Ascending aorta (tissue), 2 donors: ENCODE measurements at regions of chr9 and their contacts with region 1.

Region 1: DNA sequence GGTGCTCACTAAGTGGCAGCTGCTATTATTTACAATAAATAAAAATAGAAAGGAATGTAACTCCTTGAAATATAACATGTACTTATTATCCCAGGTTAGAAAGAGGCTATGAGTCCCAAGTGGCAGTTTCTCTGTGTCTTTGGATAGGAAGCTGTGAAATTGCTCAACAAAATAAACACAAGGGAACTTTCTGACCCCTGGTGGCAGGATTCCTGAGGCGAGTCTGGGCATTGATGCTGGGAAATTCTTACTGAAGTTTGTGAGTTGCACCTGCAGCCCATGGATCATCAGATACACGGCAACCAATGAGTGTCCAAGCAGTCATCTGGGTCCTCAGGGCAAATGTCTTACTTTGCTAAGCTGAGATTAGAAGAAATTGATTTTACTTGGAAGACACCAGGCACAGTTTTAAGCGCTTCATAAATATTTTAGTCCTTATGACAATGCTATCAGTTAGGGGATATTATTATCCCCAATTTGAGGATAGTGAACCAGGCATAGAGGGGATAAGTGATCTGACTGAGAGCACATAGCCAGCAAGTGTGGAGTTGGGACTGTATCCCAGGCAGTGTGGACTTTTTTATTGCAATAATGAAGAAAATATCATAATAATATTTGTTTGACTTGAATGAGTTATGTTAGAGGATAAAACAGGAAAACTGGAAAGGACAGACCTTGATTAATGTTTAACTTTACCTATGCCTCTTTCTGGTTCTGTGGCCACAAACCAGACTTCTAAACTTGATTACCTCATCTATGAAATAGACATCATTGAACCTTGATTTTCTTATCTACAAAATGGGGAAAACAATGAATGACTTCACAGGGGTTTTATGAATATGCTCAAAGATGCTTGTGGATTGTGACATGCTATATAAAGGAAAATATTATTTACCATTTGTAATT is 265.5 kb upstream of the ADAMTSL1 start:
- DNase-seq: peak in 1 of 2 donors; percentile 69
- H3K4me3 ChIP-seq: no peak overlapping the region
- H3K27ac ChIP-seq: no peak overlapping the region
- H3K4me1 ChIP-seq: peaks cover 0 to 3% of the 10 kb centered on the region in 2 donors
- H3K27me3 ChIP-seq: no peaks in the 10 kb centered on the region
- CTCF ChIP-seq: peak; percentile 10 to 68 (median 47)

Region 2: GRCh38 chr9:17531642-17532254 is 676.7 kb before region 1 on chr9:
- intact Hi-C with region 1: loop called (anchors 5 kb)
- DNase-seq: no peak
- H3K4me3 ChIP-seq: no peak overlapping the region
- H3K27ac ChIP-seq: no peak overlapping the region
- H3K4me1 ChIP-seq: no peaks in the 10 kb centered on the region
- H3K27me3 ChIP-seq: no peaks in the 10 kb centered on the region
- CTCF ChIP-seq: peak in 2 of 3 experiments; percentile 28 to 52

Region 3: DNA sequence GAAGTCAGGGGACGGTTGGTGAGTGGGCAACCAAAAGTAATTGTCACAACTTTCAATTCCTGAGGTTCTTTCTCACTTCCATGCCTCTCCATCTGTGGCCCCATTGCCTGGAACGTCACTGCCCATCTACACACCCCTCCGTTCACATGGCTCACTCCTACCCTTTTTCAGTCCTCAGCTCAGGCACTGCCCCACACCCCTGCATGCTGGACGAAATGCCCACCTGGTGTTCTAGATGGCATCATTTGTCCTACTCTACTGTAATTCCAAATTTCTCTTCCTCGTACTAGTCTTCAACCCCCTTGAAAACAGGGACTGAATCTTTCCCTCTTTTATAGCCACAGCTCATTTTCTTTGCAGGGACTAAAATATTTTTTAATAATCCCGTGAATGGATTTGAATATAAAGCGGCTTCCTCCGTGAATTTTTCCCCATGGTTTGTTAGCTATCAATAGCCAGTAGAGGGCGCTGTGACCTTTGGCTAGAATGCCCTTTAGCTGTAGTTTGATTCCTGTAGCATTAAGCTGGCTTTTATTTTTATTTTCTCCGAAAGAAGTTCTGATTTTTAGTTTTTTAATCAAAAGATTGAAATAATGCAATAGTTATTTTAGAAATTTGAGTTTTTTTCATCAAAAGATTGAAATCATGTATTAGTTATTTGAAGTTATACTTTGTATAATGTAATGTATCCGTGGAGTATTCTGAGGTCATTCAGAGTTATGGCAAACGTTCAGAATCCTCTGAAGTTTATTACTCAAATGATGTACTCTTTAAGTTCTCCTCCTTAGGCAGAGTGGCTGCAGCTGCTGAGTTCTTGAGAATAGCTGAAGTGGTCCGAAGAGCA is 397.5 kb before region 1 on chr9:
- intact Hi-C with region 1: loop called (anchors 1 kb)
- DNase-seq: peak in 1 of 2 donors; percentile 68
- H3K4me3 ChIP-seq: no peak overlapping the region
- H3K27ac ChIP-seq: no peak overlapping the region
- H3K4me1 ChIP-seq: no peaks in the 10 kb centered on the region
- H3K27me3 ChIP-seq: no peaks in the 10 kb centered on the region
- CTCF ChIP-seq: peak; percentile 66 to 91 (median 88)

Region 4: GRCh38 chr9:17906176-17906840 is 302.1 kb before region 1 on chr9:
- intact Hi-C with region 1: loop called (anchors 5 kb)
- DNase-seq: peak in 1 of 2 donors; percentile 65
- H3K4me3 ChIP-seq: peak overlapping the region; percentile 62 to 78
- H3K27ac ChIP-seq: peak overlapping the region; percentile 88 to 95
- H3K4me1 ChIP-seq: peaks cover 4% of the 10 kb centered on the region in 2 donors
- H3K27me3 ChIP-seq: no peaks in the 10 kb centered on the region
- CTCF ChIP-seq: no peak

Region 5: GRCh38 chr9:18149471-18150011 is 58.9 kb before region 1 on chr9:
- intact Hi-C with region 1: loop called (anchors 5 kb)
- DNase-seq: no peak
- H3K4me3 ChIP-seq: no peak overlapping the region
- H3K27ac ChIP-seq: no peak overlapping the region
- H3K4me1 ChIP-seq: no peaks in the 10 kb centered on the region
- H3K27me3 ChIP-seq: no peaks in the 10 kb centered on the region
- CTCF ChIP-seq: no peak

Region 6: GRCh38 chr9:18268381-18268780 is 60.0 kb after region 1 on chr9:
- intact Hi-C with region 1: no loop called
- DNase-seq: no peak
- H3K4me3 ChIP-seq: no peak overlapping the region
- H3K27ac ChIP-seq: no peak overlapping the region
- H3K4me1 ChIP-seq: no peaks in the 10 kb centered on the region
- H3K27me3 ChIP-seq: no peaks in the 10 kb centered on the region
- CTCF ChIP-seq: no peak